ENCODE measurements at regions of chr5 and their contacts with region 1.

Region 1: DNA sequence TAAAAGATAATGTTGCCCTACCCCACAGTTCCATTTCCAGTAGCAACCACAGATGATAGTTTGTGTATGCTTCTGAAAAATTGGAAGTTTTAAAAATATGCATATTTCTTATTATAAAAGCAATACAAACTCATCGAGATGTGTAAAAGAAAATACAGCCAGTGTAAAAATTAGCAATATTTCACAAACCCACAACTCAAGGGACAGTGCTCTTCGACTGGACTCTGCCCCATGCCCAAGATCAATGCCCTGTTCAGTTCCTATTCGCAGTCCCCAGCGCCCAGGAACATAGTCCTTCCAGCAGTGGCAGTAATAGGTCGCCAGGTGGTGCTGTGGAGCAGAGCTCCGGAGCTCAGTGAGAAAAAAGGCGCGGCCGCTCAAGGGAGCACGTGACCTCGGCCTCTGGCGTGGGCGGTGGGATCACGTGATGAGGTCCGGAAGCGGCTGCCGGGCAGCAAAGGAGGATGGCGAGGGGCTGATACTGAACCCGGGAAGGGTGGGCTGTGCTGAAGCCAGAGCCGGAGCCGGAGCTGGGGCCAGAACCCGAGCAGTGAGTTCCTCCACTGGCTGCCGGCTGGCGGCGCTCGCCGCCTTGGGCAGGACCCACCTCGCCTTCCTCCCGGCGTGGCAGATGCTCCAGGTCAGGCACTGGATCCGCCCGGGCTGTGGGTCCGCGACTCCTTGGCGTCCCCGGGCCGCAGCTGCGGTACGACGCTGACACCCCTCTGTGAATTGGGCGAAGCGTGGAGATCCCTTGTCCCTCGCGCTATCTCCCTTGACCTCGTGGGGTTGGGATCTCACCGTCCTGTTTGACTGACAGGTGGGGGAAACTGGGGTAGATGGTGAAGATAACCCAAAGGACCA is at the start of gene SLC36A1:
- DNase-seq: peak; percentile 98
- ATAC-seq: peak; percentile 98
- H3K4me3 Mint-ChIP-seq: peak within 1 kb of the TSS; percentile 93
- H3K27ac Mint-ChIP-seq: peak within 1 kb of the TSS; percentile 87
- H3K4me1 Mint-ChIP-seq: peaks cover 26% of the 10 kb centered on the region
- H3K27me3 Mint-ChIP-seq: peaks cover 10% of the 10 kb centered on the region
- CTCF ChIP-seq: peak; percentile 90
- total RNA-seq, gene SLC36A1: 3.5 to 3.7 TPM

Region 2: DNA sequence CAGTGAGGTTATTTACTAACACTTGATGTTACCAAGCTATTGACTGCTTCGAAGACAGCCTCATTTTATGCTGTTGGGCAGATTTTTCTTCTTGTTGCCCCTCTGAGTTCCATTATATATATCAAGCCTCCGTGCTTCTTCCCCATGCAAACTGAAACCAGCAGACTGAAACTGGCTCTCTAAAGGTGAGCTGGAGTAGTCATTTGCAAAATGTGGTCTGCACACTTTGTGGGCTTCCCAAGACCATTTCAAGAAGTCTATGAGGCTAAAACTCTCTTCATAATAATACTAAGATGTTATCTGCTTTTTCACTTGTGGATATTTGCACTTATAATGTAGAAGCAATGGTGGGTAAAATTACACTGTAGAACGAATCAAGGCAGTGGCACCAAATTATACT is 13.9 kb after region 1 on chr5:
- CTCF ChIA-PET with region 1: interaction called, 29 read pairs
- POLR2A ChIA-PET with region 1: no interaction called
- intact Hi-C with region 1: no loop called
- DNase-seq: no peak
- ATAC-seq: no peak
- H3K4me3 Mint-ChIP-seq: no peak overlapping the region
- H3K27ac Mint-ChIP-seq: no peak overlapping the region
- H3K4me1 Mint-ChIP-seq: no peaks in the 10 kb centered on the region
- H3K27me3 Mint-ChIP-seq: no peaks in the 10 kb centered on the region
- CTCF ChIP-seq: no peak

Region 3: DNA sequence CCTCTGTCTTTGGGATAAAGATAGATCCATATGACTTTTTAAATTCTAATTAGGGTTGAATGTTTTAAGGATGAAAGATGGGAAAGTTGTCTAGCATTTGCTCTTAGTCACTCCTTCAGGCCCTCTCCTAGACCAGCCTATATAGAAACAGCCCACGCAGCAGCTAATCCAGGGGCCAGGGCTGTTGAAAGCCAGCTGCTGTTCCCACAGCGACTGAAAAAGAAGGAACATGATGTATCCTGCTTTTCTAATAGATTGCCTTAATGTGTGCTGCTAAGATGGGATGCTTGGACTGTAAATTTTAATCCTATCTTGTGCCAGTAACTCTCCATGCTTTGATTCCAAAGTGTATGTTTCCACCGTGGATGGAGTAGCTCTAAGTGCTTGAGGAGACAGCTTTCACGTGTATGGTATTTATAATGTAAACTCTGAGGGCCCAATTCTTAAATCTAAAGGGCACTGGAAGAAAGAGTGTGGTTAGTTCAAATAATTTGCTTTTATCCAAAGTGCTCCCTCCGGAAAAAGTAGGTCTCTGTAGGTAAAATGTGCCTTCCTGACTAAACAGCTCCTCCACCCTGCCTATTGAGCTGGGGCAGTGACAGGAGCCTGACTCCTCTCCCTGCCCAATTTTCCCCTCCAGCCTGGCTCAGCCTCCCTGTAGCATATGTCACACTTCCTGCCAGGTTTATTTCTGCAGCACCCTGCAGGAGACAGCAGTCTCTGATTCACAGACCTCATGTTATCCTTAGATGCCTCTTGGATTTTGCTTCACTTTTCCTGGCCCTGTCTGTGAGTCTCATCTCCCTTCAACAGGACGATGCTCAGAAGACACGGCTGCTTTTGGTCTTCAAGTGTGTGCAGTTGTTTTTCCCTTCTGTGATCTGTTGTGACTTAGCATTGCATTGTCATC is 33.2 kb after region 1 on chr5:
- CTCF ChIA-PET with region 1: no interaction called
- POLR2A ChIA-PET with region 1: no interaction called
- intact Hi-C with region 1: no loop called
- DNase-seq: no peak
- ATAC-seq: no peak
- H3K4me3 Mint-ChIP-seq: no peak overlapping the region
- H3K27ac Mint-ChIP-seq: no peak overlapping the region
- H3K4me1 Mint-ChIP-seq: no peaks in the 10 kb centered on the region
- H3K27me3 Mint-ChIP-seq: no peaks in the 10 kb centered on the region
- CTCF ChIP-seq: no peak

Region 4: DNA sequence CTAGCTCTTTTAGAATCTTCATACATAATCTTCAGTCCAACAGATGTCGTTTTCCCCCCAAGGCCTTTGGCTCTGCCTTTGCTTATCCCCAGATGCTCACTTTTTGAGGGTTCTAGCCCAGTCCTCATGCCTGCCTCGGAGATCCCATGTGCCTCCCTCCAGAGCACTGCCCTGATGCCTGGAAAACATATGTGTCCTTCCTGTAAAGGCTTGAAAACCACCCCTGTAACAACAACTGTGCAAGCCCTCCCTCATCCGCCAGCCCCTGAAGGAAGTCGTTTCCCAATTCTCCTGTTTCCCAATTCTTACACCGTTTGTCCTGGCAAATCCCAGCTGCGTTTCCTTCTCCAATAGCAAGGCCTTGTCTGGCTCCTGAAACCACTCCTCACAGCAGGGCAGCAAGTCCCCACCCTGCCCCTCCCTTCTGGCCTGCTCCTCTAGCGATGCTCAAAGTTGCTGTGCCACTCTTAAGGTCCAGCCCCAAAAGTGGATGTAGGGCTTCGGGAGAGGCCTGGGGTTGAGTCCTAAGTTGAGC is 52.2 kb after region 1 on chr5:
- CTCF ChIA-PET with region 1: interaction called, 11 read pairs
- POLR2A ChIA-PET with region 1: no interaction called
- intact Hi-C with region 1: loop called (anchors 1 kb)
- DNase-seq: no peak
- ATAC-seq: no peak
- H3K4me3 Mint-ChIP-seq: no peak overlapping the region
- H3K27ac Mint-ChIP-seq: no peak overlapping the region
- H3K4me1 Mint-ChIP-seq: peaks cover 2% of the 10 kb centered on the region
- H3K27me3 Mint-ChIP-seq: no peaks in the 10 kb centered on the region
- CTCF ChIP-seq: no peak

Region 5: DNA sequence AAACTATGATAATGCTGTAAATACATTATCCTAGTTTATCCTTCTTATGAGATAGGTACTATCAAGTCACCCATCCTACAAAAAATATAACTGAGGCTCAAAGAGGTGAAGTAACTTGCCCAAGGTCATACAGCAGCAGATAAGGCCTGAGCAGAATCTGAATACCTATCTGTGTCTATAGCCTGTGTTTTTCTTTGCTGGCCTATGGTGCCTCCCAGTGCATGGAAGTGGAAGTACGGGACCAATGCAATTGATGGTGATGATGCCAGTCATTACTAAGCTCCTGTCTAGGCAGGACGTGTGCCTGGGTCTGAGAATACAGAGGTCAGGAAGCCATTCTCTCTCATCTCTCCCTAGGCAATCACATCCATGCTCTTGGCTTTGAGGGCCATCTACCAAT is 75.9 kb after region 1 on chr5:
- CTCF ChIA-PET with region 1: interaction called, 23 read pairs
- POLR2A ChIA-PET with region 1: no interaction called
- intact Hi-C with region 1: loop called (anchors 5 kb)
- DNase-seq: peak; percentile 64
- ATAC-seq: peak; percentile 96
- H3K4me3 Mint-ChIP-seq: no peak overlapping the region
- H3K27ac Mint-ChIP-seq: no peak overlapping the region
- H3K4me1 Mint-ChIP-seq: no peaks in the 10 kb centered on the region
- H3K27me3 Mint-ChIP-seq: no peaks in the 10 kb centered on the region
- CTCF ChIP-seq: peak; percentile 62

Region 6: DNA sequence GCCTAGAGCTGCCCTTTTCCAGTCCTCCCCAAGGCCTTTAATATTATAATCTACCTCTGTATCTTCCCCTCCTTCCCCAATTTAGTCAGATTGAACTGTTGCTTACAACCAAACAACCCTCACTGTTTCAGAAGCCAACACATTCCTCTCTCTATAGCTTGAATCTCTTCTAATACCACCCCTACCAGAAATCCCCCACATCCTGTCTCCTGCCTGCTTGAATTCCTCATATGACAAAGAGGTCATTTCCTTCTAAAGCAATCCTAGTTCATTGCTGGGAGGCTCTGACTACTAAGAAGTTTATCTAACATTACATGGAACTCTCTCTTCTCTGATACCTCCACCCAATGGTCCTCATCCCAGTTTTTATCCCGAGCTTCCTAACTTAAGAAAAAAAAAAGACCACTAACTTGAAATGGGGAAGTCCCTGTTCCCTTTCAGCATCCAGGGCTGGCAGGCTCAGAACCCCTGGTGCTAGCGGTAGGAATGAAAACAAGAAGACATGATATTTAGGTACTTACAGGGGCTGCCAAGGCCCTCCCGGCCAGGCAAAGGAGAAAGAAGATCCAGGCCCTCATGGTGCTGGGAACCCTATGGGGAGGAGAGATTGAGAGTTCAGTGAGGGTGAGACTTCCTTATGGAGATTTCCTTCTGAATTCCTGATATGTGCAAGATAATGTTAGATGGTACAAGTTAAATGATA is 228.4 kb after region 1 on chr5:
- CTCF ChIA-PET with region 1: no interaction called
- POLR2A ChIA-PET with region 1: no interaction called
- intact Hi-C with region 1: no loop called
- DNase-seq: no peak
- ATAC-seq: no peak
- H3K4me3 Mint-ChIP-seq: no peak overlapping the region
- H3K27ac Mint-ChIP-seq: no peak overlapping the region
- H3K4me1 Mint-ChIP-seq: peaks cover 3% of the 10 kb centered on the region
- H3K27me3 Mint-ChIP-seq: peaks cover 2% of the 10 kb centered on the region
- CTCF ChIP-seq: no peak

Region 7: GRCh38 chr5:151947925-151948608 is 500.7 kb after region 1 on chr5:
- CTCF ChIA-PET with region 1: no interaction called
- POLR2A ChIA-PET with region 1: no interaction called
- intact Hi-C with region 1: no loop called
- DNase-seq: no peak
- ATAC-seq: no peak
- H3K4me3 Mint-ChIP-seq: no peak overlapping the region
- H3K27ac Mint-ChIP-seq: no peak overlapping the region
- H3K4me1 Mint-ChIP-seq: peaks cover 2% of the 10 kb centered on the region
- H3K27me3 Mint-ChIP-seq: peaks cover 7% of the 10 kb centered on the region
- CTCF ChIP-seq: no peak